Naive thymus-derived CD4-positive, alpha-beta T cell (primary cell): ENCODE measurements at regions of chr1 and their contacts with region 1.

Region 1: DNA sequence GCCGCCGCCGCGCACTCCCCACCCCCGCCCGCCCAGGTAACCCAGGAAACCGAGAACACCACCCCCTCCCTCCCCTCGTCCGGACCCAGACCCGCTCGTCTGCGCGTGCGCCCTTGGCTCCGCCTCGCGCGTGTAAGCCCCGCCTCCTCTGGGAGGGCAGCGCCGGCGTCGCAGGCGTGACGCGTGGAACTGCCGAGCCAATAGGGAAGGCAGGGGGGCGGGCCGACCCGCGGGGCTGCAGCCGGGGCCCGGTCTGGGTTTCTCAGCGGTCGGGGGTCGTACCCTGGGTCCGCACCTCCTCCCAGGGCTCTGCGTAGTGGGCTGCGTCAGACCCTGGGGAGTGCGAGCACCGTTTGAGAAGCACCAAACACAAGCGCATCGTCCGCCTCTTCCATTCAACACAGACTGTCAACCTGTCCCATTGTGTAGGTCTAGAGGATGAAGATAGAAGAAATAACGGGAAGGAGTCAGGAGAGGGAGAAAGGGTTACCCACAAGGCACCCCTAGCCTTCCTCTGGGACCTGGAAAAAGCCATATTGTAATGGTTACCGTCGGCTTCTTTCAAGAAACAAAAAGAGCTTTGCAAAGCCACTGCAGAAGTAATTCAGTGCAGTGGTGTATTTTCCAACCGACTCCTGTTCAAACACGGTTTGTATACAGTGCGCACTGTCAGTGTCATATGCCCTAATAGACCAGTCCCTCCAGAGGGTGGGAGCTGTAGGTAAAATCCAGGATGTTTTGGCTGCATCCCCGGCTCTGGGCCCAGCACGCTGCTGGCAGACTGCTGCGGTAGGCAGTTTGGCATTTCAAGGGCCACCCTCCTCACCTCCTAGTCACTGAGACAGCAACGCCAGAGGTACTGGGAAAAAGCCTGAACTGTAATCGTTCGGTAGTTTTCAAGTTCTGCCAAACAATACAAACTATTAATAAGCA is 473 bp upstream of the LYST start:
- DNase-seq: peak; percentile 97 to 100 (median 99)
- ATAC-seq: peak; percentile 85
- H3K4me3 ChIP-seq: peak overlapping the region; percentile 89
- H3K4me3 Mint-ChIP-seq: peak overlapping the region; percentile 84 to 99 (median 96)
- H3K27ac ChIP-seq: peak overlapping the region; percentile 99
- H3K27ac Mint-ChIP-seq: peak overlapping the region; percentile 93 to 100 (median 98)
- H3K4me1 ChIP-seq: peaks cover 25 to 31% of the 10 kb centered on the region in 2 donors
- H3K4me1 Mint-ChIP-seq: peaks cover 32 to 55% (median 51%) of the 10 kb centered on the region in 7 donors
- H3K27me3 ChIP-seq: no peaks in the 10 kb centered on the region
- H3K27me3 Mint-ChIP-seq: no peaks in the 10 kb centered on the region

Region 2: DNA sequence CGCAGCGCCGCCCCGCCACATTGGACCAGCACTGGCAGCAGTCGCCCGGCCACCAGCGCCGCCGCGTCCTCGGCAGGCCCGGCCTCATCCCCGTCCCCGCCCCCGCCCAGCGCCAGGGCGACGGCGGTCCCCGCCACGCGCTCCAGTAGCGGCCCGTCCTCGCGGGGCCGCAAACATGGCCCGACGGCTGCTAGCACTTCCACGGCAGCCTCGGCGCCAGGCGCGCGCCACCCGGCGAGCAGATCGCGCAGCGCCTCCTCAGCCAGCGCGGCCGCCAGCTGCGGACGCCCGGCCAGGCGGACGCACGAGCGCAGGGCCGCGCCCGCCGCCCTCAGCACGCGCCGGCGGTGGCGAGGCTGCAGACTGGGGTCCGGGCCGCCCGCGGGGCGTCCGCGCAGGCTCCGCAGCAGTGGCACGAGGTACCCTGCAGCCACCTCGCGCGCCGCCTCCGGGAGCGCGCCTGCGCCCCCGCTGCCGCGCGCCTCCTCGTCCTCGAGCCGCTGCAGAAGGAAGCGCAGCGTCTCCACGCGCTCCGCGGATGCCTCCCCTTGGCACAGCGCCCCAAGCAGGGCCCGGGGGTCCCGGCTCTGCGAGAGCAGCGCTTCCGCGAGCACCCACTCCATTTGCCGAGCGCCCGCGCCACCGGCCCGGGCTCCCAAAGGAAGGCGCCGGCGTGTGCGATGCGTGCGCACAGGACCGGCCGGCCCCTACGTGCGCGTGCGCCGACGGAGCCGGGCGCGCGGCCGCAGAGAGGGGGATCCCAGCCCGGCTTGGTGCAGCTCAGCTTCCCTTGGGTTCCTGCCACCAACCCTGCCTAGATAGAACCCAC is 1388.5 kb before region 1 on chr1 and contains the start of gene TARBP1:
- CTCF ChIA-PET with region 1: no interaction called
- POLR2A ChIA-PET with region 1: no interaction called
- intact Hi-C with region 1: loop called in 1 of 2 experiments (anchors 2 kb)
- DNase-seq: peak; percentile 68 to 87 (median 83)
- ATAC-seq: peak; percentile 82
- H3K4me3 ChIP-seq: peak within 1 kb of the TSS; percentile 79
- H3K4me3 Mint-ChIP-seq: peak within 1 kb of the TSS; percentile 82 to 90 (median 90)
- H3K27ac ChIP-seq: peak within 1 kb of the TSS; percentile 75
- H3K27ac Mint-ChIP-seq: peak within 1 kb of the TSS; percentile 73 to 95 (median 85)
- H3K4me1 ChIP-seq: peaks cover 0 to 16% of the 10 kb centered on the region in 2 donors
- H3K4me1 Mint-ChIP-seq: peaks cover 14 to 44% (median 39%) of the 10 kb centered on the region in 7 donors
- H3K27me3 ChIP-seq: no peaks in the 10 kb centered on the region
- H3K27me3 Mint-ChIP-seq: peaks cover 0 to 19% (median 3%) of the 10 kb centered on the region in 5 donors
- total RNA-seq, gene TARBP1: 45.8 to 49.6 (median 47.5) TPM

Region 3: GRCh38 chr1:235843461-235843961 is 23.7 kb before region 1 on chr1:
- CTCF ChIA-PET with region 1: interaction called, 8 read pairs
- POLR2A ChIA-PET with region 1: interaction called, 6 read pairs
- intact Hi-C with region 1: loop called (anchors 1 kb)
- DNase-seq: peak in 3 of 9 donors; percentile 16 to 28 (median 28)
- ATAC-seq: peak; percentile 89
- H3K4me3 ChIP-seq: no peak overlapping the region
- H3K4me3 Mint-ChIP-seq: no peak overlapping the region
- H3K27ac ChIP-seq: no peak overlapping the region
- H3K27ac Mint-ChIP-seq: peak overlapping the region in 1 of 9 donors; percentile 33
- H3K4me1 ChIP-seq: peaks cover 11 to 20% of the 10 kb centered on the region in 2 donors
- H3K4me1 Mint-ChIP-seq: peaks cover 35 to 75% (median 58%) of the 10 kb centered on the region in 7 donors
- H3K27me3 ChIP-seq: no peaks in the 10 kb centered on the region
- H3K27me3 Mint-ChIP-seq: no peaks in the 10 kb centered on the region

Region 4: GRCh38 chr1:235923466-235924021 is 56.4 kb after region 1 on chr1:
- CTCF ChIA-PET with region 1: no interaction called
- POLR2A ChIA-PET with region 1: interaction called, 3 read pairs
- intact Hi-C with region 1: loop called in 1 of 2 experiments (anchors 5 kb)
- DNase-seq: peak in 5 of 9 donors; percentile 8 to 40 (median 26)
- ATAC-seq: peak; percentile 63
- H3K4me3 ChIP-seq: no peak overlapping the region
- H3K4me3 Mint-ChIP-seq: peak overlapping the region in 8 of 10 donors; percentile 6 to 69 (median 54)
- H3K27ac ChIP-seq: no peak overlapping the region
- H3K27ac Mint-ChIP-seq: peak overlapping the region; percentile 20 to 88 (median 55)
- H3K4me1 ChIP-seq: peaks cover 12 to 19% of the 10 kb centered on the region in 2 donors
- H3K4me1 Mint-ChIP-seq: peaks cover 18 to 41% (median 26%) of the 10 kb centered on the region in 7 donors
- H3K27me3 ChIP-seq: no peaks in the 10 kb centered on the region
- H3K27me3 Mint-ChIP-seq: peaks cover 0 to 12% (median 0%) of the 10 kb centered on the region in 5 donors

Region 5: GRCh38 chr1:236064674-236065508 is 197.7 kb after region 1 on chr1 and contains the start of gene NID1:
- CTCF ChIA-PET with region 1: no interaction called
- POLR2A ChIA-PET with region 1: no interaction called
- intact Hi-C with region 1: loop called in 1 of 2 experiments (anchors 5 kb)
- DNase-seq: peak in 7 of 9 donors; percentile 0 to 46 (median 8)
- ATAC-seq: peak; percentile 36
- H3K4me3 ChIP-seq: peak within 1 kb of the TSS; percentile 58
- H3K4me3 Mint-ChIP-seq: peak within 1 kb of the TSS; percentile 56 to 77 (median 66)
- H3K27ac ChIP-seq: no peak within 1 kb of the TSS
- H3K27ac Mint-ChIP-seq: no peak within 1 kb of the TSS
- H3K4me1 ChIP-seq: peaks cover 12 to 19% of the 10 kb centered on the region in 2 donors
- H3K4me1 Mint-ChIP-seq: peaks cover 15 to 29% (median 20%) of the 10 kb centered on the region in 7 donors
- H3K27me3 ChIP-seq: peaks cover 4 to 17% of the 10 kb centered on the region in 2 donors
- H3K27me3 Mint-ChIP-seq: peaks cover 33 to 63% (median 44%) of the 10 kb centered on the region in 5 donors
- total RNA-seq, gene NID1: 0.11 to 6.2 (median 0.22) TPM

Region 6: DNA sequence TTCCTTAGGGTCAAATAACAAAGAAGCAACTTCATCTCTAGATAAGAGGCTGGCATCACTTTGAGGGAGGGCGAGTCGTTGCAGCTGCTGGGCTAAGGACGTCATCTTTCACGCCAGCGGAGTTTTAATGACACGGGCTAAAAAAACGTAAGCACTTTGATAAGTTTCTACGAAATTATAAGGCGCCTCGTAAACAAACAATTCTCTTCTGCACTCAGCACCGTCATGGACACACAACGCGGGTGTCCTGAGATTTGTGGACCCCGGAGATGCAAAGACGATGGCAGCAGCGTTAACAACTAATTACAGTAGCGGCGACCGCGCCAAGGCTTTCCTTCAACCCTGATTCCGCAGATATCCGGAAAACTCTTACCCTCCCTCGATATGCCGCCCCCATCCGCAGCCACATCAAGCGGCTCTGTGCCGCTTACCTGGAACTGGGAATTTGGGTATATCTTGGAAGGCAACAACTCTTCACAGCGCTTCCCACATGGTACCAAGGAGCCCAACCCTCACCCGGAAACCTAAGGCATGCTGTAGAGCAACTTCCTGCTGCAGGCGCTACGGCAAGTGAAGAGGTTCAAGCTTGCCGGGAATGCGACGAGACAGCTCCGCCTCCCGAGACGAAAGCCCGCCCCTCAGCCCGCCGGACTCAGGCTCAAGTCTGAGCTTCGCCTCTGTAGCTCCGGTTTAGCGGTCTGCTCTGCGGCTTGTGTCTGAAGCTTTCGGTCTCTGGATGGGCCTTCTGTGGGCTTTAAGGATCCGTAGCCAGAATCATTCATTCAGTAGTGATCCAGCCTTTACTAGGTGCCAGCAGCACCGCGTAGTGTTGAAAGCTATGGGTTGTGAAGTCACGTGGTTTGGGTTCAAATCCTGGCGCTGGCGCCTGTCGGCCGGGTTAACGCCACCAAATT is 737.1 kb after region 1 on chr1 and contains the start of gene HEATR1:
- CTCF ChIA-PET with region 1: no interaction called
- POLR2A ChIA-PET with region 1: no interaction called
- intact Hi-C with region 1: loop called in 1 of 2 experiments (anchors 5 kb)
- DNase-seq: peak; percentile 58 to 88 (median 84)
- ATAC-seq: peak; percentile 94
- H3K4me3 ChIP-seq: peak within 1 kb of the TSS; percentile 88
- H3K4me3 Mint-ChIP-seq: peak within 1 kb of the TSS; percentile 91 to 99 (median 98)
- H3K27ac ChIP-seq: peak within 1 kb of the TSS; percentile 79
- H3K27ac Mint-ChIP-seq: peak within 1 kb of the TSS; percentile 93 to 98 (median 97)
- H3K4me1 ChIP-seq: peaks cover 13 to 14% of the 10 kb centered on the region in 2 donors
- H3K4me1 Mint-ChIP-seq: peaks cover 20 to 49% (median 32%) of the 10 kb centered on the region in 7 donors
- H3K27me3 ChIP-seq: peaks cover 0 to 4% of the 10 kb centered on the region in 2 donors
- H3K27me3 Mint-ChIP-seq: peaks cover 4 to 14% (median 13%) of the 10 kb centered on the region in 5 donors
- total RNA-seq, gene HEATR1: 29.3 to 58.7 (median 45.8) TPM